ENCODE measurements at regions of chr12 and their contacts with region 1.

Region 1: DNA sequence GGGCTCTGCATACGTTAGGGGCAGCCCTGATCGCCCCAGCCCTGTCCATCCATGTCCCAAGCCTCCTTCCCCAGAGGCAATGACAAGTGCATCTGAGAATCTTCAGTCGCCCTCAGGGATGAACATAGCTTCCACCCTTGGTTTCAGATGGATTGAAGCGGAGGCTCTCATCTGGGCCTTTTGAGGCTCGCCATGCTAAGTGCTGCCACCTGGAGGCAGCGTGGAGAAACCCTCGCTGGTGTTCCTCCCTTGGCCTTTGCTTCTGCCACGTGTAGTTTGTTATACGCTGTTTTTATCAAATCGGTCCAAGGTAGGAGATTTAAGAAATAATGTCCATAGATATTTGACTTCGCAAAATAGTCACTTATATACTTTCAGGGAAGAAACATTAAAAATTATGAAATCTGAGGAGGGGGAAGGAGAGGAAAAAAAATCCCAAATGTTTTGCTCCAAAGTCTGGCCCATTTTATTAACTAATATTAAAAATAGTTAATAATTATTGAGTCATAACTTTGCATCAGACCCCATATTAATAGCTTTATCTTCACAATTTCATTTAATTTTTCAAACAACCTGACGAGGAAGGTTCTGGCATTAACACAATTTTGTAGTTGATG is 28.8 kb upstream of the LRRC10 start:
- DNase-seq: peak; percentile 70
- ATAC-seq: peak; percentile 98
- H3K4me3 Mint-ChIP-seq: no peak overlapping the region
- H3K27ac Mint-ChIP-seq: no peak overlapping the region
- H3K4me1 Mint-ChIP-seq: no peaks in the 10 kb centered on the region
- H3K27me3 Mint-ChIP-seq: no peaks in the 10 kb centered on the region
- CTCF ChIP-seq: peak; percentile 76

Region 2: DNA sequence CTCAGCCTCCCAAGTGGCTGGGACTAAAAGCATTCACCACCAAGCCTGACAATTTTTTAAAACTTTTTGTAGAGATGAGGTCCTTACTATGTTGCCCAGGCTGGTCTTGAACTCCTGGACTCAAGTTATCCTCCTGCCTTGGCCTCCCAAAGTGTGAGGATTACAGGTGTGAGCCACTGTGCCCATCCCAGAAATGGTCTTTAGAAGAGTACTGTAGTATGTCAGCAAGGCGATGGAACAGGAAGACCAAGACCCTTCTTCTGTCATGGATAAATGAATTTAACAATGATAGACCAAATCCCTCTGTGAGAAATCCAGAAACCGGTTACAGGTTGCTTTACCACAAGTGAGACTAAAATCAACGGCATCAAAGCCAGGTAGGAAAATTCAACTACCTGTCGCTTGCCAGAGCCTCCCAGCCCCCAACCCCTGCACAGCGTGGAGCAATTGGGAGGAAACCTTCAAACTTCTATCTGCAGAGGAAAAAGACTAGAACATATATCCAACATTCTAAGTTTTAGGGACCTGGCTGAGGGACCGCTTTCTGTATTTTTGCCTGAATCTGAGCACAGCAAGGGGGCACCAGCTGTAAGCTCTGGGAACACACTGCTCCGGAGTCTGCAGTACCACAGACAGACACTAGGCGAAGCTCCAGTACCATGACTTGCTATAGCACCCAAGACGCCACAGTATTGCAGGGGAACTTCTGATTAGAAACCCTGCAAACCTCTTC is 348.8 kb before region 1 on chr12:
- CTCF ChIA-PET with region 1: interaction called, 14 read pairs
- POLR2A ChIA-PET with region 1: no interaction called
- intact Hi-C with region 1: loop called (anchors 5 kb)
- DNase-seq: peak; percentile 91
- ATAC-seq: peak; percentile 100
- H3K4me3 Mint-ChIP-seq: no peak overlapping the region
- H3K27ac Mint-ChIP-seq: no peak overlapping the region
- H3K4me1 Mint-ChIP-seq: peaks cover 5% of the 10 kb centered on the region
- H3K27me3 Mint-ChIP-seq: peaks cover 24% of the 10 kb centered on the region
- CTCF ChIP-seq: peak; percentile 97

Region 3: GRCh38 chr12:69359531-69360347 is 279.8 kb before region 1 on chr12 and contains the start of gene YEATS4:
- CTCF ChIA-PET with region 1: interaction called, 28 read pairs
- POLR2A ChIA-PET with region 1: no interaction called
- intact Hi-C with region 1: loop called (anchors 2 kb)
- DNase-seq: peak; percentile 95
- ATAC-seq: peak; percentile 82
- H3K4me3 Mint-ChIP-seq: peak within 1 kb of the TSS; percentile 77
- H3K27ac Mint-ChIP-seq: peak within 1 kb of the TSS; percentile 96
- H3K4me1 Mint-ChIP-seq: peaks cover 23% of the 10 kb centered on the region
- H3K27me3 Mint-ChIP-seq: peaks cover under 1% of the 10 kb centered on the region
- CTCF ChIP-seq: no peak
- total RNA-seq, gene YEATS4: 54.0 to 60.9 TPM

Region 4: GRCh38 chr12:69548687-69549086 is 90.8 kb before region 1 on chr12:
- CTCF ChIA-PET with region 1: no interaction called
- POLR2A ChIA-PET with region 1: no interaction called
- intact Hi-C with region 1: no loop called
- DNase-seq: no peak
- ATAC-seq: no peak
- H3K4me3 Mint-ChIP-seq: no peak overlapping the region
- H3K27ac Mint-ChIP-seq: no peak overlapping the region
- H3K4me1 Mint-ChIP-seq: peaks cover 10% of the 10 kb centered on the region
- H3K27me3 Mint-ChIP-seq: no peaks in the 10 kb centered on the region
- CTCF ChIP-seq: no peak

Region 5: GRCh38 chr12:69616025-69616424 is 23.5 kb before region 1 on chr12:
- CTCF ChIA-PET with region 1: interaction called, 16 read pairs
- POLR2A ChIA-PET with region 1: no interaction called
- intact Hi-C with region 1: no loop called
- DNase-seq: no peak
- ATAC-seq: no peak
- H3K4me3 Mint-ChIP-seq: no peak overlapping the region
- H3K27ac Mint-ChIP-seq: no peak overlapping the region
- H3K4me1 Mint-ChIP-seq: no peaks in the 10 kb centered on the region
- H3K27me3 Mint-ChIP-seq: peaks cover 10% of the 10 kb centered on the region
- CTCF ChIP-seq: no peak

Measured in activated CD8-positive, alpha-beta T cell treated with anti-CD3 and anti-CD28 coated beads for 36 hours (primary cell).